Aorta (tissue), 5 donors: ENCODE measurements at regions of chr10 and their contacts with region 1.

Region 1: DNA sequence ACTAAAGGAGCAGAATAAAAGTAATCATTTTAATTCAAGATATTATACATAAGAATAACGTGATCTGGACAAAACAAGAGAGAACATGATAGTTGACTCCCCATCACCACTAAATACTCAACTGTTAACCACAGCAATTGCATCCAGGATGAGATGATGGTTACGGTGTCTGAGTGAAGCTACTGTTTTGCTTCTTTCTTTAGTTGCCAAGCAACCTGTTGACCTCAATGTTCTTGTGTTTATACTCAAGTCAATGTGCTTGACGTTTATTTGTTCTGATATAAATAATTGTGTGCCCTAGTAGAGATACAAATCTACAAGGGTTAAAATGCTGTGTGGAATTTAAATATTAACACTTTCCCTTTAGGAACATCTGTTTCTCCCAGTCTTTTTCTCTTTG is 31.4 kb upstream of the MPP7 start:
- DNase-seq: no peak
- ATAC-seq: no peak
- H3K4me3 ChIP-seq: no peak overlapping the region
- H3K27ac ChIP-seq: no peak overlapping the region
- H3K4me1 ChIP-seq: no peaks in the 10 kb centered on the region
- H3K27me3 ChIP-seq: no peaks in the 10 kb centered on the region

Region 2: GRCh38 chr10:28370107-28370835 is 36.0 kb after region 1 on chr10:
- intact Hi-C with region 1: loop called in 1 of 2 experiments (anchors 5 kb)
- DNase-seq: no peak
- ATAC-seq: no peak
- H3K4me3 ChIP-seq: no peak overlapping the region
- H3K27ac ChIP-seq: no peak overlapping the region
- H3K4me1 ChIP-seq: no peaks in the 10 kb centered on the region
- H3K27me3 ChIP-seq: peaks cover 0 to 2% of the 10 kb centered on the region in 2 donors